ENCODE measurements at regions of chr2 and their contacts with region 1.

Region 1: GRCh38 chr2:64865073-64865830 is 123.9 kb upstream of the SLC1A4 start:
- DNase-seq: peak; percentile 84
- H3K4me3 ChIP-seq: peak overlapping the region; percentile 60 to 67 (median 64)
- H3K27ac ChIP-seq: peak overlapping the region; percentile 86 to 93 (median 90)
- H3K4me1 ChIP-seq: peaks cover 0 to 20% (median 15%) of the 10 kb centered on the region in 4 donors
- H3K27me3 ChIP-seq: no peaks in the 10 kb centered on the region
- CTCF ChIP-seq: peak in 2 of 4 experiments; percentile 24 to 67
- EP300 ChIP-seq: no peak
- POLR2A ChIP-seq: no peak

Region 2: DNA sequence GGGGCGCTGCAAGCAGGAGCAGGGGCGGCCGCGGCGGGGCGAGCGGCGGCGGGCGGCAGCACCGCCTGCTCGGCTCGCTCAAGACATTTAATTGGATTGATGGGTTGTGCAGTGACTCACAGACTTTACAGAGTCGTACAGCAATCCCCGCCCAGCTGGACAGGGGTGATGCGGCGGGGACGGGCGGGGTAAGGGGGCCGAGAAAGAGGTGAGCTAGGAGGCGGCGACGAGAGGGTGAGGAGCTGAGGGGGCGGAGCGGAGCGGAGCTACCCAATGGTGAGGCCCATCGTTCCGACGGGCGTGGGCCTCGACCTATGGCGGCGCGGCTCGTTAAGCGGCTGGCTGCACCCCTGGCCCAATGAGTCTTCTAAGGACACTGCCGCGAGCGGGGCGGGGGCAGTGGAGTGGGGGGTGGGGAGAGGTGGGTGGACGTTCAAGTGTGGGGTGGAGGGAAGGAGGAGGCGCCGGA is 114.4 kb before region 1 on chr2:
- intact Hi-C with region 1: loop called (anchors 1 kb)
- DNase-seq: peak; percentile 100
- H3K4me3 ChIP-seq: peak overlapping the region; percentile 67 to 78 (median 72)
- H3K27ac ChIP-seq: peak overlapping the region; percentile 94 to 98 (median 98)
- H3K4me1 ChIP-seq: peaks cover 0 to 26% (median 14%) of the 10 kb centered on the region in 4 donors
- H3K27me3 ChIP-seq: no peaks in the 10 kb centered on the region
- CTCF ChIP-seq: no peak
- EP300 ChIP-seq: peak in 2 of 4 donors; percentile 3 to 15
- POLR2A ChIP-seq: peak; percentile 98 to 99